ENCODE measurements at regions of chr3 and their contacts with region 1.

Region 1: GRCh38 chr3:67113802-67114407 is 115.8 kb downstream of the KBTBD8 start:
- DNase-seq: peak; percentile 80
- ATAC-seq: peak; percentile 94
- H3K4me3 ChIP-seq: no peak overlapping the region
- H3K4me3 Mint-ChIP-seq: no peak overlapping the region
- H3K27ac ChIP-seq: no peak overlapping the region
- H3K27ac Mint-ChIP-seq: no peak overlapping the region
- H3K4me1 ChIP-seq: no peaks in the 10 kb centered on the region
- H3K4me1 Mint-ChIP-seq: peaks cover 1% of the 10 kb centered on the region
- H3K27me3 ChIP-seq: peaks cover 0 to 6% (median 2%) of the 10 kb centered on the region in 4 experiments
- H3K27me3 Mint-ChIP-seq: peaks cover 17% of the 10 kb centered on the region
- CTCF ChIP-seq: peak; percentile 96

Region 2: DNA sequence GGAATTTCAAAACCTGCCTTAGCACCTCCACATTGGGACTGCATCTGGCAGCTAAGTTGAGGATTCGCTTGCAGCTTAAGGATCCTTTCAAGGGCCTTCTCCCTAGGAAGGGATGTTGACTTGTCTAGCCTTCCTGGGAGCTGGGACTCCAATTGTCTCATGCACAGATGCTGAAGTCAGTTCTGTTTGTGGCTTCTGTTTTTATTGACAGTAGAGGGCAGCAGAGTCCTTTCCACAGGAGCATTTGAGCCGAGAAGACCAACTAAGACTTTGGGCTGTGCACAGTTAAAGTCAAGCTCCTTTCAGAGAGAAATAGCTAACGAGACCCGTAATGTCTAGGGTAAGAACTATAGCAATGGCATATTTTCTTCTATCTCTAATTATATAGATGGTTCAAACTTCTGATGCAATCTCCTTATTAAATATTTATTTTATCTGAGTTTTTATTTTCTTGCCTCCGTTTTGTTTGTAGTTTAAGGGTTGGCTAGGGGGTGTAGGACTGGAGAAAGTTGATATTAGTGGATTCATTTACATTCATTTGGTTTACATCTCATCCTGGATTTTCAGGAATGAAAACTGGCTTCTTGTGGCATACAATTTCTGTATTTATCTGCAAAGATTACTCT is 175.5 kb before region 1 on chr3:
- CTCF ChIA-PET with region 1: interaction called, 41 read pairs
- POLR2A ChIA-PET with region 1: no interaction called
- intact Hi-C with region 1: no loop called
- DNase-seq: peak; percentile 63
- ATAC-seq: peak; percentile 51
- H3K4me3 ChIP-seq: no peak overlapping the region
- H3K4me3 Mint-ChIP-seq: no peak overlapping the region
- H3K27ac ChIP-seq: no peak overlapping the region
- H3K27ac Mint-ChIP-seq: no peak overlapping the region
- H3K4me1 ChIP-seq: no peaks in the 10 kb centered on the region
- H3K4me1 Mint-ChIP-seq: no peaks in the 10 kb centered on the region
- H3K27me3 ChIP-seq: peaks cover 0 to 9% (median 5%) of the 10 kb centered on the region in 4 experiments
- H3K27me3 Mint-ChIP-seq: peaks cover 28% of the 10 kb centered on the region
- CTCF ChIP-seq: peak; percentile 87

Region 3: GRCh38 chr3:66989860-66990665 is 123.8 kb before region 1 on chr3:
- CTCF ChIA-PET with region 1: interaction called, 52 read pairs
- POLR2A ChIA-PET with region 1: no interaction called
- intact Hi-C with region 1: no loop called
- DNase-seq: peak; percentile 58
- ATAC-seq: peak; percentile 83
- H3K4me3 ChIP-seq: peak overlapping the region in 4 of 5 experiments; percentile 36 to 61 (median 54)
- H3K4me3 Mint-ChIP-seq: peak overlapping the region; percentile 93
- H3K27ac ChIP-seq: peak overlapping the region in 1 of 2 donors; percentile 37
- H3K27ac Mint-ChIP-seq: peak overlapping the region; percentile 88
- H3K4me1 ChIP-seq: no peaks in the 10 kb centered on the region
- H3K4me1 Mint-ChIP-seq: peaks cover 7% of the 10 kb centered on the region
- H3K27me3 ChIP-seq: no peaks in the 10 kb centered on the region
- H3K27me3 Mint-ChIP-seq: peaks cover 4% of the 10 kb centered on the region
- CTCF ChIP-seq: peak; percentile 63

Region 4: DNA sequence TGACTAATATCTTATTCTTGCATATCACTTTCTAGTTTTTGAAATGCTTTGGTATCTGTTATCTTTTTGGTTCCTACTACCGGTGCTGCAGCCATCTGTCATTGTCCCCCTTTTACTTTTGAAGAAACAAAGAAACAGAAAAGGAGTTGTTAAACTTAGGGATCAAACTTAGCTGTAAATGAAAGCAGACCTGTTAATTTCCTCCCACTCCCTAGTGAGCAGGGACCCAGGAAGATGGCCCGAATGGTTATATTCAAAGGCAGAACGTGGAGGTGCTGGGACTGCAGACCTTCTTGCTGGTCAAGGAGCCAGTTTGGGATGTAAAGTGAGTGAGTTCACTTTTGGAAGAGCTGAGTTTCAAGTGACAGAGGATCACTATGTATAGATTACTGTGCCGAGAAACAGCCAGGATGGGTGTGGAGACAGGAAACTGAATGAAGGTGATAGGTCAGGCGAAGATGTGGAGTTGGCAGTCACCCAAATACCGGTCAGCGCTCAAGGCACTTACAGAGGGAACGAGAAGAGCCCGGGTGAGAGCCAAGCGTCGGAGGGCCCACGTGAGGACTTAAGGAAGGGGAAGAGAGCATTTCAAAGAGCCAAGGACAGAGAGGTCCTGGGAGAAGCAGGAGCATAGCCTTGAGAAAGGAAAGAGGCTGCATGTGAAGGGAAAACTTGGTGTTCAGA is 95.7 kb before region 1 on chr3:
- CTCF ChIA-PET with region 1: interaction called, 22 read pairs
- POLR2A ChIA-PET with region 1: no interaction called
- intact Hi-C with region 1: no loop called
- DNase-seq: peak; percentile 17
- ATAC-seq: peak; percentile 24
- H3K4me3 ChIP-seq: peak overlapping the region in 1 of 5 experiments; percentile 37
- H3K4me3 Mint-ChIP-seq: peak overlapping the region; percentile 63
- H3K27ac ChIP-seq: peak overlapping the region; percentile 36 to 64
- H3K27ac Mint-ChIP-seq: peak overlapping the region; percentile 70
- H3K4me1 ChIP-seq: peaks cover 43 to 46% of the 10 kb centered on the region in 2 donors
- H3K4me1 Mint-ChIP-seq: peaks cover 54% of the 10 kb centered on the region
- H3K27me3 ChIP-seq: no peaks in the 10 kb centered on the region
- H3K27me3 Mint-ChIP-seq: no peaks in the 10 kb centered on the region
- CTCF ChIP-seq: no peak

Region 5: GRCh38 chr3:67401921-67402320 is 288.0 kb after region 1 on chr3:
- CTCF ChIA-PET with region 1: no interaction called
- POLR2A ChIA-PET with region 1: no interaction called
- intact Hi-C with region 1: no loop called
- DNase-seq: no peak
- ATAC-seq: no peak
- H3K4me3 ChIP-seq: no peak overlapping the region
- H3K4me3 Mint-ChIP-seq: no peak overlapping the region
- H3K27ac ChIP-seq: no peak overlapping the region
- H3K27ac Mint-ChIP-seq: no peak overlapping the region
- H3K4me1 ChIP-seq: no peaks in the 10 kb centered on the region
- H3K4me1 Mint-ChIP-seq: no peaks in the 10 kb centered on the region
- H3K27me3 ChIP-seq: no peaks in the 10 kb centered on the region
- H3K27me3 Mint-ChIP-seq: no peaks in the 10 kb centered on the region
- CTCF ChIP-seq: no peak

Region 6: GRCh38 chr3:67685499-67685898 is 571.6 kb after region 1 on chr3:
- CTCF ChIA-PET with region 1: no interaction called
- POLR2A ChIA-PET with region 1: no interaction called
- intact Hi-C with region 1: loop called (anchors 10 kb)
- DNase-seq: peak; percentile 75
- ATAC-seq: peak; percentile 93
- H3K4me3 ChIP-seq: peak overlapping the region in 2 of 5 experiments; percentile 11 to 42
- H3K4me3 Mint-ChIP-seq: peak overlapping the region; percentile 53
- H3K27ac ChIP-seq: peak overlapping the region; percentile 87 to 90
- H3K27ac Mint-ChIP-seq: peak overlapping the region; percentile 84
- H3K4me1 ChIP-seq: peaks cover 37 to 42% of the 10 kb centered on the region in 2 donors
- H3K4me1 Mint-ChIP-seq: peaks cover 31% of the 10 kb centered on the region
- H3K27me3 ChIP-seq: no peaks in the 10 kb centered on the region
- H3K27me3 Mint-ChIP-seq: no peaks in the 10 kb centered on the region
- CTCF ChIP-seq: no peak

Region 7: GRCh38 chr3:68876112-68876713 is 1762.3 kb after region 1 on chr3:
- CTCF ChIA-PET with region 1: interaction called, 52 read pairs
- POLR2A ChIA-PET with region 1: no interaction called
- intact Hi-C with region 1: no loop called
- DNase-seq: peak; percentile 65
- ATAC-seq: peak; percentile 51
- H3K4me3 ChIP-seq: no peak overlapping the region
- H3K4me3 Mint-ChIP-seq: no peak overlapping the region
- H3K27ac ChIP-seq: no peak overlapping the region
- H3K27ac Mint-ChIP-seq: no peak overlapping the region
- H3K4me1 ChIP-seq: no peaks in the 10 kb centered on the region
- H3K4me1 Mint-ChIP-seq: no peaks in the 10 kb centered on the region
- H3K27me3 ChIP-seq: no peaks in the 10 kb centered on the region
- H3K27me3 Mint-ChIP-seq: peaks cover 35% of the 10 kb centered on the region
- CTCF ChIP-seq: peak; percentile 98